ENCODE measurements at regions of chr2 and their contacts with region 1.

Region 1: DNA sequence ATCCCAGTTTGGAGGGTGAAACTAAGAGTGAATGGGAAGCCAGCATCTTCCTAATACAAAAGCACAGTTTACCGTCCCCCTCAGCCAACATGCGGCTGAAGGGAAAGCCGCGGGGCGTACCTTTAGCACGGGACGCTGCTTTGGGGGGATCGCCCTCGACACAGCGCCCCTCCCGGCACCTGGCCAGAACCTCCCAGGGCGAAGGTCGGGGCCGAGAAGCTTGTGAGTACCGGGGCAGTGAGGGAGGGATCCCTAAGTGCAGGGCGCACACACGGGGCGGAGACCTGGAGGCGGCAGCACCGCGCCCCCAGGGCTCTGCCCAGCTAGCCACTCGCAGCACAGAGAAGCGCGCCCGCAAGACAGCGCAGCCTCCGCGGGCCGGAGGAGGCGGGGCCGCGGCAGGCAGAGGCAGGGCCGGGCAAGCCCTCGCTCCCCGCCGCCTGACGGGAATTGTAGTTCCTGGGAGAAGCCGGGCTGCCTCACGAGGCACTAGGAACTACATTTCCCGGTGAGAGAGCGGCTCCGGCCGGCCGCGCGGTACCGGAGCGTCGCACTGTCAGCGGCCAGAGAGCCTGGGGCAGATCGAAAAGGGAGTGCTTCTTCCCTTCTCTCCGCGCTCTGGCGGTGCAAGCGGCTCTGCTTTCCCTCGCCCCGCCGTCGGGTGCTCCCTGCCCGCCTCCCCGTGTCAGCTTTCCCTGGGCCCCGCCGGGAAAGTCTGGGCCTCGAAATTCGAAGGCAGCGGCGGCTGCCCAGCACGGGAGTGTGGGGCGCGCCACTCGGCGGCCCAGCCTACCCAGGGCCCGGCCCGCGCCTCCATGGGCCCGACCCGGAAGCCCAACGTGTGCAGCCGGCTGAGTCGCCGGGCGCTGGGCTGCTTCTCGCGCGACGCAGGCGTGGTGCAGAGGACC is at the starts of genes DCAF17 and METTL8:
- DNase-seq: peak; percentile 97
- H3K4me3 ChIP-seq: peak within 1 kb of the TSS; percentile 61 to 79 (median 72)
- H3K27ac ChIP-seq: peak within 1 kb of the TSS; percentile 96 to 99 (median 98)
- H3K4me1 ChIP-seq: peaks cover 7 to 25% (median 13%) of the 10 kb centered on the region in 4 donors
- H3K27me3 ChIP-seq: no peaks in the 10 kb centered on the region
- CTCF ChIP-seq: peak; percentile 21 to 54 (median 35)
- EP300 ChIP-seq: no peak
- POLR2A ChIP-seq: peak; percentile 90
- total RNA-seq, gene DCAF17: 6.2 to 24.7 (median 19.2) TPM
- total RNA-seq, gene METTL8: 6.7 to 64.5 (median 22.1) TPM

Region 2: GRCh38 chr2:171160119-171160955 is 273.7 kb before region 1 on chr2 and contains the start of gene TLK1:
- in situ Hi-C with region 1: no loop called
- intact Hi-C with region 1: loop called (anchors 10 kb)
- DNase-seq: peak; percentile 71
- H3K4me3 ChIP-seq: peak within 1 kb of the TSS; percentile 70 to 91 (median 84)
- H3K27ac ChIP-seq: peak within 1 kb of the TSS; percentile 93 to 98 (median 98)
- H3K4me1 ChIP-seq: peaks cover 3 to 43% (median 22%) of the 10 kb centered on the region in 4 donors
- H3K27me3 ChIP-seq: no peaks in the 10 kb centered on the region
- CTCF ChIP-seq: peak in 1 of 5 experiments; percentile 7
- EP300 ChIP-seq: no peak
- POLR2A ChIP-seq: peak; percentile 44
- total RNA-seq, gene TLK1: 39.6 to 76.3 (median 53.2) TPM

Region 3: DNA sequence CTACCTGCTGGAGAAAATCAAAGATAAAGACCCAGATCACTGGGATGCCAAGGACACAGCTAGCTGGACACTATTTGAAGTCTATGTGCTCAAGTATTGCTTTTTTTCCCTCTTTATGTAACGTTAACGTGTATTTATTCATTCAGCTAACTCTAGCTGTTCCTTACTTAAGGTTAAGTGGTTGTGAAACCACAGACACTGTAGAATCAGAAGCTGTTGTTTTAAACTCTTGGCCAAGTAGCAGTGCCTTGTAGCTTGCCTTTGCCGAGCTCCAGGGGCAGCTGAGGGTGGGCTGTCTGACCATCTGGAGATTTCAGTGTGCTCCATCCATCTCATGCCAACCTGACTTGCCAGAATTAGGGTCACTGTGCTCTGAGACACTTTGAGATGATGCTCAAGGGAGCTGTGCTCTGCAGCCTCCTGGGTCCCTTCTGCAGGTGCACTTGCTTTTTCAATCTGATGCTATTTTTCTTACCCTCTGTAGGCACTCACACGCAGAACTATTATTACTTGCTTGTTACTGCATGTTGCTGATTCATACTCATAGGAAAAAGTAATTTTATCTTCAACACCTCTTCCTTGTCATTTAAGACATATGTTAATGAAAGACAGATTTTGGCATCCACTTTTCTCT is 116.4 kb before region 1 on chr2:
- in situ Hi-C with region 1: no loop called
- intact Hi-C with region 1: no loop called
- DNase-seq: no peak
- H3K4me3 ChIP-seq: no peak overlapping the region
- H3K27ac ChIP-seq: peak overlapping the region in 2 of 4 donors; percentile 1 to 22
- H3K4me1 ChIP-seq: peaks cover 0 to 17% (median 7%) of the 10 kb centered on the region in 4 donors
- H3K27me3 ChIP-seq: no peaks in the 10 kb centered on the region
- CTCF ChIP-seq: no peak
- EP300 ChIP-seq: no peak
- POLR2A ChIP-seq: no peak

Region 4: GRCh38 chr2:171522052-171522787 is 88.2 kb after region 1 on chr2 and contains the start of gene CYBRD1:
- in situ Hi-C with region 1: no loop called
- intact Hi-C with region 1: loop called (anchors 10 kb)
- DNase-seq: peak; percentile 80
- H3K4me3 ChIP-seq: peak within 1 kb of the TSS; percentile 48 to 83 (median 76)
- H3K27ac ChIP-seq: peak within 1 kb of the TSS; percentile 87 to 95 (median 87)
- H3K4me1 ChIP-seq: peaks cover 0 to 21% (median 5%) of the 10 kb centered on the region in 4 donors
- H3K27me3 ChIP-seq: peaks cover 9% of the 10 kb centered on the region
- CTCF ChIP-seq: no peak
- EP300 ChIP-seq: no peak
- POLR2A ChIP-seq: peak; percentile 59
- total RNA-seq, gene CYBRD1: 50.7 to 124 (median 63.9) TPM

Region 5: DNA sequence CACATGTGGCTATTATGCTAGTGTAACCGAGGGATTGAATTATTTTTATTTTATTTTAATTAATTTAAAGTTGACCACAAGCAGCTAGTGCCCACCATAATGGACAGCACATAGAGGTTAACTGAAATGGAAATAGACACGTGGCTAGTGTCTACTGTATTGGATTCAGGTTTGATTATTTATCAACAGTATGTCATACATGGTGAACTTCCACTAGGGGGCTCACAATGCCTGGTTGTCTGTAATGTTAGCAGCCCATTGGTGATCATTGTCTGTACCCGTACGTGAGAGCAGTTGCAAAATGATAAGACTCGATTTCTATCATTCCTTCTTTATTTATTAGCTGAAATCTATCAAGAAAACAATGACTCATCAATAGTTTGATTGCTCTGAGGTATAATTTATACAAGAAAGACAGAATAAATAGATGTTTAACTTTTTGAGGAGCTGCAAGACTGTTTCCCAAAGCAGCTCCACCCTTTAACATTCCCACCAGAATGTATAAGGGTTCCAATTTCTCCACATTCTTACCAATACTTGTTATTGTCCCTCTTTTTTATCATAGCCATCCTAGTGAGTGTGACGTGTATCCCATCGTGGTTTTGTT is 164.8 kb after region 1 on chr2:
- in situ Hi-C with region 1: no loop called
- intact Hi-C with region 1: no loop called
- DNase-seq: peak; percentile 34
- H3K4me3 ChIP-seq: no peak overlapping the region
- H3K27ac ChIP-seq: no peak overlapping the region
- H3K4me1 ChIP-seq: no peaks in the 10 kb centered on the region
- H3K27me3 ChIP-seq: peaks cover 14% of the 10 kb centered on the region
- CTCF ChIP-seq: peak; percentile 59 to 80 (median 63)
- EP300 ChIP-seq: no peak
- POLR2A ChIP-seq: no peak